A673 (cell line): ENCODE measurements at regions of chr2 and their contacts with region 1.

Region 1: GRCh38 chr2:24273598-24273997 is 86.7 kb downstream of the ITSN2 start:
- DNase-seq: no peak
- H3K4me3 ChIP-seq: no peak overlapping the region
- H3K27ac ChIP-seq: no peak overlapping the region
- H3K4me1 ChIP-seq: no peaks in the 10 kb centered on the region
- H3K27me3 ChIP-seq: no peaks in the 10 kb centered on the region
- CTCF ChIP-seq: no peak

Region 2: DNA sequence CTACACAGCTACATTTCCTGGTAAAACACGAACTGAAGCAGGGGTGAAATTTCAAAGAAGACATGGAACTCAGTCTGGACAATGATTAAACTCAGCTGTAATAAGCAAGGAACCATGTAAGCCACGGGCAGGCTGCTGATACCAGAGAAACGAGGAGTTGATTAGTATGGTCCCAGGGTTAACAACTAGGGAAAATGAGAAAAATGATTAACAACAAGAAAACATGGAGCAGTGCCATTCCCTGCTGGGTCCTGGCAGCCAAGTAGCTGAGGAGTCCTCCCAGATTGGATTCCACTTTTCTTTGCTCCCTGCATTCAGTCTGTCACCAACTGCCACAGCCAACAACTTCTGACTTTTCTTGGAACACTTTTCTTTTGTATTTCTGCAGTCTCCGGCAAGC is 1405.6 kb before region 1 on chr2:
- CTCF ChIA-PET with region 1: no interaction called
- POLR2A ChIA-PET with region 1: no interaction called
- intact Hi-C with region 1: no loop called
- DNase-seq: no peak
- H3K4me3 ChIP-seq: no peak overlapping the region
- H3K27ac ChIP-seq: no peak overlapping the region
- H3K4me1 ChIP-seq: no peaks in the 10 kb centered on the region
- H3K27me3 ChIP-seq: peaks cover 11% of the 10 kb centered on the region
- CTCF ChIP-seq: no peak

Region 3: DNA sequence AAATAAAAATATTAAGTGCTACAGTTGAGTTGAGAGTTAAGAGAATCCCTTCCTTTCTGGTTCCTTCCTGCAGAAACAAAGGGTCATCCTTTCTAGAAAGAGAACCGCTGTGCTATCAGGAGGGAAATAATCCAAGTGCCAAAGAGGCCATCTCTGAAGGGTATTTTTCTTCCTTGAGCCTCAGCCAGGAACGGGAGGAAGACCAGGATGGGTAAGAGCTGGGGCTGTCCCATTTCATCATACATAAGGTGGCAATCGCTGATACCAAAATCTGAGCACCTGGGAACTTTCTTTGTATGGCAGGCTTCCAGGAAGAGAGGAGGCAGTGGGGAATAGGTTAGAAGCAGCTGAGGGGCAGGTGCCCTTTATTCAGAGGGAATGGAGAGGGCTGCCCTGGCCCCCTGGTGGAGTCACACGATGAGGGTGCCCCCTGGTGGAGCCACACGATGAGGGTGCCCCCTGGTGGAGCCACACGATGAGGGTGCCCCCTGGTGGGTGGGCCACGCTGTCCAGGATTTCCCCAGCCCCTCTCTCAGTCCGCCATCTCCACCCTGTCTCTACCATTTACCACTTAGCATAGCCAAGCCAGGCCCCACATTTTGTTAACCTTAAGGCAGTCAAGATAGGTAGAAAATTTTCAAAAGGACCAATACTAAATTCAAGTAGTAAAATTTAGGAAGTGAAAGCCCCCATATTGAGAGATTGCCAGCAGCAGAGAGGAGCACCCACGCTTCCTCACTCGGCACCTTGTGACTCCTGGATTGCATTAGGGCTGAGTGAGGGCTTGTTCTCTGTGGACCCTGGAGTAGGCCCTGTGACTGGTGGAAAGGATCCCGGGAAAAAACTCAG is 109.2 kb before region 1 on chr2:
- CTCF ChIA-PET with region 1: no interaction called
- POLR2A ChIA-PET with region 1: no interaction called
- intact Hi-C with region 1: no loop called
- DNase-seq: peak; percentile 30
- H3K4me3 ChIP-seq: no peak overlapping the region
- H3K27ac ChIP-seq: no peak overlapping the region
- H3K4me1 ChIP-seq: no peaks in the 10 kb centered on the region
- H3K27me3 ChIP-seq: no peaks in the 10 kb centered on the region
- CTCF ChIP-seq: peak; percentile 83

Region 4: DNA sequence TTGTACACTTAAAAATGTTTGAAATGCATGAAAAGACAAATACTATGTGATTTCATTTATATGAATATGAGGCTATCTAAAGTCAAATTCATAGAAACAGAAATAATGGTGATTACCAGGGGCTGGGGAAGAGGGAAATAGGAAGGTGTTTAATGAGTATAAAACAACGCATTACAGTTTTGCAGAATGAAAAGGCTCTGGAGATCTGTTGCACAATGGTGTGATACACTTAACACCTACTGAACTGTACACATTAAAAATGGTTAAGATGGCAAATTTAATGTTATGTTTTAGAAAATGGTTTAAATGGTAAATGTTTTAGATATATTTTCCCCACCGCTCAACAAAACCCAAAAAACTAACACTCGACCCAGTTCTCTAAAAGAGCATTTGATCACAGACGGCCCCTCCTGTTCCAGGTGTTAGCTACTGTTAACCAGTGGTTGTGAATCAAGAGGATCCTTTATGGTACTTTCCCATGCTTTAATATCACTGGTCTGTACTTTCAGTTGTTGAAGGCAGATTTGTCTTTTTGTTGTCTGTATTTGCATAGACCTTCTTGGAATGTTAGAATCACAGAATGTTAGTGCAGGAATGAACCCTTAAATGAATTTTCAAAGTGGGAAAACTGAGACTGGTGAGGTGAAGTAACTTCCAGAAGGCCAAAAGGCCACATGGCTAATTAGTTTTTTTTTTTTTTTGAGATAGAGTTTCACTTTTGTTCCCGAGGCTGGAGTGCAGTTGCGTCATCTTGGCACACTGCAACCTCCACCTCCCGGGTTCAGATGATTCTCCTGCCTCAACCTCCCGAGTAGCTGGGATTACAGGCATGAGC is 1770.5 kb after region 1 on chr2:
- CTCF ChIA-PET with region 1: no interaction called
- POLR2A ChIA-PET with region 1: interaction called, 20 read pairs
- intact Hi-C with region 1: no loop called
- DNase-seq: no peak
- H3K4me3 ChIP-seq: no peak overlapping the region
- H3K27ac ChIP-seq: peak overlapping the region; percentile 22
- H3K4me1 ChIP-seq: peaks cover 9% of the 10 kb centered on the region
- H3K27me3 ChIP-seq: no peaks in the 10 kb centered on the region
- CTCF ChIP-seq: no peak